Activated B cell treated with CpG ODN at 0.5 μM for 24 hours (primary cell): ENCODE measurements at regions of chr2 and their contacts with region 1.

Region 1: GRCh38 chr2:127379712-127380355 is 7.9 kb downstream of the MAP3K2 start:
- DNase-seq: no peak
- ATAC-seq: no peak
- H3K4me3 Mint-ChIP-seq: no peak overlapping the region
- H3K27ac Mint-ChIP-seq: no peak overlapping the region
- H3K4me1 Mint-ChIP-seq: peaks cover 63% of the 10 kb centered on the region
- H3K27me3 Mint-ChIP-seq: no peaks in the 10 kb centered on the region
- CTCF ChIP-seq: no peak

Region 2: DNA sequence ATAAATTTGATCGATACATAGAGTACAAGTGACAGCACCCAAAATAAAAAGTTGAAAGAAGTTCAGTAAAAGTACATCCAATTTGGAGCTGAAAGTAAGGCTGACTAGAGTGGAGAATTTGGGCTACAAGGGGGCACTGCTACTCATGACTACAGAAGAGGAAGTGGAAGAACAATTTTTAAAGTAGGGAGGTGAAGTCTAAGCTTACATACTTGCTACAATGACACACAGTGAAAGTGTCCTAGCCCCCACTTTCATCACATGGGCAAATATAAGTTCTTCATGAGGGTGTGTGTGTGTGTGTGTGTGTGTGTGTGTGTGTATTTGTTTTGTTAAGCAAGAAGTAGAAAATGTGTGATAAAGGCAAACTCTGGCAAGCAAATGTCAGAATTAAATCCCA is 37.7 kb before region 1 on chr2:
- CTCF ChIA-PET with region 1: no interaction called
- POLR2A ChIA-PET with region 1: no interaction called
- intact Hi-C with region 1: no loop called
- DNase-seq: no peak
- ATAC-seq: peak; percentile 77
- H3K4me3 Mint-ChIP-seq: no peak overlapping the region
- H3K27ac Mint-ChIP-seq: peak overlapping the region; percentile 22
- H3K4me1 Mint-ChIP-seq: peaks cover 38% of the 10 kb centered on the region
- H3K27me3 Mint-ChIP-seq: no peaks in the 10 kb centered on the region
- CTCF ChIP-seq: no peak

Region 3: GRCh38 chr2:127365211-127365643 is 14.6 kb before region 1 on chr2:
- CTCF ChIA-PET with region 1: no interaction called
- POLR2A ChIA-PET with region 1: no interaction called
- intact Hi-C with region 1: loop called (anchors 2 kb)
- DNase-seq: no peak
- ATAC-seq: peak; percentile 25
- H3K4me3 Mint-ChIP-seq: no peak overlapping the region
- H3K27ac Mint-ChIP-seq: peak overlapping the region; percentile 8
- H3K4me1 Mint-ChIP-seq: peaks cover 53% of the 10 kb centered on the region
- H3K27me3 Mint-ChIP-seq: no peaks in the 10 kb centered on the region
- CTCF ChIP-seq: no peak